Left ventricle myocardium superior (tissue), 1 donor: ENCODE measurements at regions of chr15 and their contacts with region 1.

Region 1: GRCh38 chr15:33209575-33210481 is 15.3 kb upstream of the FMN1 start:
- DNase-seq: no peak
- ATAC-seq: no peak

Region 2: DNA sequence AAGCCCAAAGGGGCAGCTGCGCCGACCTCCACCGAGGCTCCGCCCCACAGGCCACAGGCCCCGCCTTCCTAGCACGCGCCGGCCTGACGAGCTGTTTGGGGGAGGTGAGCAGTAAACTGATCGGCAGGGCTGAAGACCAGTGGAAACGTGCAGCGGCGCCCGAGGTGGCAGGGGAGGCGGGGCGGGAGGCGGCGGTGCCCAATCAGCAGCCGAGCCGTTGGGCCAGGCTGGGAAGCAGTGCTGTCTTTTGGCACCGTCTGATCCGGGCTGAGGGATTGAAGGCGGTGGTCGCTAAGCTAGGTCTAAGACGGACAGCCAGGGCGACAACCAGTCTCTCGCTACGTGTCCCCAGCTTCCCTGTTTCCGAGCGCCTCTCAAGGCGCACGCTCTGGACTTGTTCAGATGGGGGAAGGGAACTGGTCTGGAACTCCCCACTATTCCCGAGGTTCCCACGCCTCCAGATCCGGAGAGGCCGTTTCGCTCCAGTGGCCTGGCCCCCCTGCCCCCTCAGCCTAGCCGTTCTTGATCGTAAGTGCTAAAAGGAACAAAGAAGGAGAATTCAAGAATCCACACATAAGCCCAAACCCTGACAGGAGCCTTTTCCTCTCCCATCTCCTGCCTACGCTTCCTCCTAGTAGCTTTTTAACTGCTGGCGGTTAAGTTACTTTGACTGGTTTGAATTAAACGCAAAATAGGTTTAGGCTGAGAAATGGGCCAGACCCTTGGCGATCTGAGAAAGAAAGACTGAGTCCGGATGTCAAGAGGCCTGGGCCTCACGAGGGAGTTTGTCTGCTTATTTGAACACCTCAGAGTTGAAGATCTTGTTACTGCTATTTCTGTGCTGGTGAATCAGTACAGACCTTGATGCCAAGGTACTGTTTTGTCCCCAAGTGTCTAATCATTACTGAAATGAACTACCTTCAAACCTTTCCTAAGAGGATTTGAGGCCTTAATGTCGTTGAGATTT is 14.8 kb before region 1 on chr15 and contains the start of gene FMN1:
- intact Hi-C with region 1: loop called (anchors 1 kb)
- DNase-seq: peak; percentile 95
- ATAC-seq: peak; percentile 100
- total RNA-seq, gene FMN1: 2.9 TPM

Region 3: GRCh38 chr15:33278816-33279612 is 69.2 kb after region 1 on chr15:
- intact Hi-C with region 1: no loop called
- DNase-seq: no peak
- ATAC-seq: no peak